Activated CD4-positive, alpha-beta memory T cell treated with anti-CD3 and anti-CD28 coated beads for 36 hours (primary cell): ENCODE measurements at regions of chr4 and their contacts with region 1.

Region 1: DNA sequence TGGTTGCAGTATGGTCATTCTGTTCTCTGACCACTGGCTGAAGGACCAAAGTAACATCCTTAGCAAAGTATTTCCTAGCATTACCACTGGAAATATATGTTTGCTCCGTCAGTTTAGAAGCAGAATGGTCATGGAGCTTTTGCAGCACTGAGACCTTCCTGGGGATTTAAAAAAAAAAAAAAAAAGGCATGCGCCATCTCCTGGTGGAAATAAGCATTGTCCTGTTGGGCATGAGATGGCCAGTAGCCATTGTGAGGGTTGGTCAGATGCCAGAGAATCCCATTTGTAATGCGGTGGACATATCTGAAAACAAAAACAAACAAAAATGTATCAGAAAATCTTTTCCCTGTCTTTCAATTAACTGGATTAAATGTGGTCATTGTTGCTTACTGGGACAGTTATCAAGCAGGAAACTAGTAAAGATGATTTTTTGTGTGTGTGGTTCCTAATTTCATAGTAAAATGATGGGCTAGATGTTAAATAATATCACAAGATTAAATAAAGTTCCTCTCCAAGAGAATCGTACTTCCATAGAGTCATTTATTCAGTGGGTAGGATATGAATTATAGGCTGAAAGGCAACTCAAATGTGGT is 139.6 kb downstream of the SOWAHB start:
- DNase-seq: no peak
- H3K4me3 Mint-ChIP-seq: no peak overlapping the region
- H3K27ac Mint-ChIP-seq: no peak overlapping the region
- H3K4me1 Mint-ChIP-seq: peaks cover 11% of the 10 kb centered on the region
- H3K27me3 Mint-ChIP-seq: peaks cover 7% of the 10 kb centered on the region

Region 2: DNA sequence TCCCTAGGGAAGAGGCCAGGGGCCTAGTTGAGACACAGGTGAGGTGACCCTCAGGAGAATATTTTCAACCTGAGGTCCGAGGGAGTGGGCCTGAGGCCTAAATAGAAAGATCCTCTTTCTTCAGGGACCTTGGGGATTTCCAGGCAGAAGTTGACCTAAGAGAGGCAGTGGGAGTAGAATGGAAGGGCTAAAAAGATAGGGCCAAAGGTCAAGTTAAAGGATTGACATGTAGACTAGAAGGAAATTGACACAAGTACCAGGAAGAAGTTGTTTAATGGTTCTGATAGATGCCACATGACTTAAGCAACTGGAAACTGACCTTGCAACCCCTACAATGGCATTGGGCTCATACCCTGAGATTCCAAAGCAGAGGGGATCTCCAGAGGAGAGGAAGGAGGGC is 246.4 kb before region 1 on chr4:
- CTCF ChIA-PET with region 1: interaction called, 6 read pairs
- POLR2A ChIA-PET with region 1: no interaction called
- intact Hi-C with region 1: loop called (anchors 5 kb)
- DNase-seq: no peak
- H3K4me3 Mint-ChIP-seq: no peak overlapping the region
- H3K27ac Mint-ChIP-seq: no peak overlapping the region
- H3K4me1 Mint-ChIP-seq: no peaks in the 10 kb centered on the region
- H3K27me3 Mint-ChIP-seq: no peaks in the 10 kb centered on the region

Region 3: GRCh38 chr4:77193511-77194102 is 435.2 kb after region 1 on chr4:
- CTCF ChIA-PET with region 1: no interaction called
- POLR2A ChIA-PET with region 1: no interaction called
- intact Hi-C with region 1: loop called (anchors 10 kb)
- DNase-seq: peak; percentile 85
- H3K4me3 Mint-ChIP-seq: peak overlapping the region; percentile 82
- H3K27ac Mint-ChIP-seq: peak overlapping the region; percentile 81
- H3K4me1 Mint-ChIP-seq: peaks cover 18% of the 10 kb centered on the region
- H3K27me3 Mint-ChIP-seq: peaks cover 2% of the 10 kb centered on the region